IMR-90 (cell line): ENCODE measurements at regions of chr11 and their contacts with region 1.

Region 1: GRCh38 chr11:77047007-77047927 is 13.1 kb downstream of the B3GNT6 start:
- DNase-seq: peak; percentile 91
- ATAC-seq: peak; percentile 87
- H3K4me3 ChIP-seq: peak overlapping the region; percentile 38; the same call in 1 of the 2 replicates
- H3K27ac ChIP-seq: no peak overlapping the region
- H3K4me1 ChIP-seq: no peaks in the 10 kb centered on the region
- H3K27me3 ChIP-seq: peaks cover 11% of the 10 kb centered on the region
- CTCF ChIP-seq: peak; percentile 86
- POLR2A ChIP-seq: no peak
- RAD21 ChIP-seq: peak; percentile 75

Region 2: DNA sequence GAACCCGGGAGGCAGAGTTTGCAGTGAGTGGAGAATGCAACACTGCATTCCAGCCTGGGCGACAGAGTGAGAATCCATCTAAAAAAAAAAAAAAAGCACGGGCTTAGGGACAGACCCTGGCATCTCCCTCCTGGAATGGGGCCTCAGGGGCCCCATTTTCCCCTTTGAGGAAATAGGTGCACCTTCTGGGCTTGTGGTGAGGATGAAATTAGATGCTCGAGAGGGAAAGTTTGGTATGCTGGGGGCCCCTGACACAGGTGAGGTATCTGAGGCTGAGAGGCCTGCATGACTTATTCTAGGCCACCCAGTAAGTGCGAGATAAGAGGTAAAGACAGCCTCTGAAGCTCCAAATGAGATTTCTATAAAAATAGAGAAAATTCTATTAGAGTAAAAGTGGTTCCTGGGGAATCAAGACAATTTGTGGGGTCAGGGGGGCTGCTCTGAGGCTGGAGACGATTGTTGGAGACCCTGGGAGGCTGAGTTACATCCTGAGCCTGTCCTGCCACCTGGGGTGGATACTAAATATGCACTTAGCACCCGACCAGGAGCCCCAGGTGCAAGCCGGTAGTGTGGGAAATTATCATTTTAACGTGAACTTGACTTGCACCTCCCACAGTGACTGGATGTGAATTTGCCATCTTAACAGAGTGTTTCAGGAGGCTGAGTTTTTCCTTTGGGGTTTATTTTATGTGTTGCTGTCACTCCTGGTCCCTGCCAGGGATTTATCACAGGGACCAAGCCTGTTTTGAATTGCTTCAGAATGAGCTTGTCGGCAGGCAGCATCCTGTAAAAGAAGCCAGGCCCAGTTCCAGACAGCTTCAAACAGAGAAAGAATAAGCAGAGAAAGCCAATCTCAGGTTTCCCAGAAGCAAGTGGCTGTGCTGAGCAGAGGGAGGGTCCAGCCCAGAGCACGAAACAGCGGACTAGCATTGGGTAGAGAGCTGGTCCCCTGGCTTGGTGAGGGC is 312.5 kb before region 1 on chr11:
- CTCF ChIA-PET with region 1: interaction called, 3 read pairs
- POLR2A ChIA-PET with region 1: no interaction called
- dilution Hi-C with region 1: no loop called
- in situ Hi-C with region 1: loop called (anchors 25 kb)
- intact Hi-C with region 1: loop called (anchors 2 kb)
- DNase-seq: no peak
- ATAC-seq: no peak; the same call in 1 of the 2 replicates
- H3K4me3 ChIP-seq: no peak overlapping the region
- H3K27ac ChIP-seq: no peak overlapping the region
- H3K4me1 ChIP-seq: peaks cover 2% of the 10 kb centered on the region; the same call in 1 of the 2 replicates
- H3K27me3 ChIP-seq: peaks cover 52% of the 10 kb centered on the region
- CTCF ChIP-seq: no peak
- POLR2A ChIP-seq: no peak
- RAD21 ChIP-seq: no peak

Region 3: DNA sequence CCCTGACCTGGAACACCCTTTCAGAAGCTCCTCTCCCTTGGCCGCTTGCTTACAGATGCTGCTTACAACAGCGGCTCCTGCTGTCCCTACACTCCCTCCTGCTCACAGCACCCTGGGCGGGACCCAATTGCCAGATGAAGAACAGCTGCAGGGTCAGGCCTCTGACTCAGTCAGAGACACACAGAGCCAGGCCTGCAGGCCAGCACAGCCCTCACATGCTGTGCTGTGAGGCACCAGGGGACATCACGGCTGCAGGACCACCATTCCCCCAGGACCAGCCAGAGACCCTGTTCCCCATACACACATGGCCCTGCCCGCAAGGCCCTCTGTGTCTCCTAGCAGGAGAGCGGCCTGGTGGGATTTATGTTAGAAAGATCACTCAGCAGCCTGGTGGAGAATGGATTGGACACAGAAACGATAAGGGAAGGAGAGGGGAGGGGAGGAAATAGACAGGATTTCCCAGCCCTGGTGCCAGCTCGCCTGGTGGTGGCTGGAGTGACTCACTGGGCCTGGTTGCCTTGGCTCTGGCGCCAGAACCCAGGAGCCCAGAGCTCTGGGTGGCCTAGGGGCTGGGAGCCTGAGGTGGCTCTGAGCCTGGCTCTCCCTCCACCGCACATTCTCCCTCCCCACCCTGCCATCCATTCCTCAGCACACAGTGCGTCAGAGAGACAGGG is 26.2 kb after region 1 on chr11:
- CTCF ChIA-PET with region 1: no interaction called
- POLR2A ChIA-PET with region 1: no interaction called
- dilution Hi-C with region 1: no loop called
- in situ Hi-C with region 1: no loop called
- intact Hi-C with region 1: loop called (anchors 2 kb)
- DNase-seq: peak; percentile 94
- ATAC-seq: peak; percentile 98
- H3K4me3 ChIP-seq: no peak overlapping the region
- H3K27ac ChIP-seq: peak overlapping the region; percentile 94
- H3K4me1 ChIP-seq: peaks cover 30% of the 10 kb centered on the region
- H3K27me3 ChIP-seq: no peaks in the 10 kb centered on the region
- CTCF ChIP-seq: peak; percentile 58
- POLR2A ChIP-seq: peak; percentile 34; the same call in 1 of the 2 replicates
- RAD21 ChIP-seq: peak; percentile 46

Region 4: DNA sequence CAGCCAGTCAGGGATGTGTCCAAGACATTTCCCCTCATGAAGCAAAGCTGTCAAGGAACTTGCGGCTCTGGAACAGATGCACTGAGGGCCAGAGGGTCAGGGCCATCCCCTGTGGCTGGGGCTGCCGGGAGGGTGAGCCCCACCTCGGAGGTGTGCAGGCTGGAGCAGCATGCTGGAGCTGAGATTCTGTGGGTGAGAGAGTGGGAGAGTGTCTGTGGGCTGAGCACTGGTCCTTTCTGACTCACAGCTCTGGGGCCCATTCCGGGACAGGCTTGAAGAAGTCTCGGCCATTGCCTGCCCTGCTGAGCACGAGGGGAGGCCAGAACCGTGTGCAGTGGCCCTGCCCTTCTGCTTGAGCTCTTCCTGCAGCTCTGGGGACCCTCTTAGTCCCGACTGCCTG is 57.5 kb after region 1 on chr11:
- CTCF ChIA-PET with region 1: interaction called, 4 read pairs
- POLR2A ChIA-PET with region 1: interaction called, 10 read pairs
- dilution Hi-C with region 1: no loop called
- in situ Hi-C with region 1: no loop called
- intact Hi-C with region 1: no loop called
- DNase-seq: peak; percentile 49
- ATAC-seq: peak; percentile 39
- H3K4me3 ChIP-seq: no peak overlapping the region
- H3K27ac ChIP-seq: no peak overlapping the region
- H3K4me1 ChIP-seq: peaks cover 19% of the 10 kb centered on the region
- H3K27me3 ChIP-seq: no peaks in the 10 kb centered on the region
- CTCF ChIP-seq: no peak
- POLR2A ChIP-seq: no peak
- RAD21 ChIP-seq: no peak

Region 5: DNA sequence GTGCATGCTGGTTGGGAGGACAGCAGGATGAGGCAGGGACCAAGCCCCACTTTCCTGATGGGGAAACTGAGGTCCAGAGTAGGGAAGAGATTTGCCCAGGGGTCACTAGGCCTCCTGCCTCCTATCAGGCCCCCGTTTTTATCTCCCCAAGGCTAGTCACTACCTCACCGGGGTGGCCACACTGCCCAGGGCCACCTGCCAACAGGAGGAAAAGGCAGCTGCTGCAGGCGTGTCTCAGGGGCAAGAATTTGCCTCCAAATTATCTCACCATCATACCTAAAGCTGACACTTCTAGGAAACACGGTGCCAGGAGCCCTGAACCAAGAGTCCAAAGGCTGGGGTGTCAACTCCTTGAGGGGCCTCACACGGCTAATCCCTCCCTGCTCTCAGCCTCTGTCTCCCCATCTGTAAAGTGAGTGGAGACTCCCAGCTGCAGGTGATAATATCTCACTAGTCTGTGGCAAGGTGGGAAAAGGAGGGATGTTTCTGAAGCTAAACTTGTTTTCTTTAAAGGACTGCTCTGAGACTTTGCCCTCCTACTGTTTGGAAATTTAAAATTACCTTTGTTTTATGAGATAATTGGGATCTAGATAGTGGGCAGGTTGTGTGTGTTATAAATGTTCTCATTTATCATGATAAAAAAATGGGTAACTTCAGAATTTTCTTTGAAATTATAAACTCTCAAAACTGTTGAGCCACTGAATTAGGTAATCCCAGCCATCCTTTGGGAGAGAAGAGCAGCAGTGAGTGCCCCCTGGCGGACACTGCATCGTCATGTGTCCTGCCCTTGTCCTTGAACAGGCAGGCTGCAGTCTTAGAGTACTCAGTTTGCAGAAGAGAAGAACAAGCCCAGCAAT is 140.7 kb after region 1 on chr11:
- CTCF ChIA-PET with region 1: no interaction called
- POLR2A ChIA-PET with region 1: no interaction called
- dilution Hi-C with region 1: no loop called
- in situ Hi-C with region 1: loop called (anchors 5 kb)
- intact Hi-C with region 1: loop called (anchors 1 kb)
- DNase-seq: peak; percentile 75
- ATAC-seq: peak; percentile 95
- H3K4me3 ChIP-seq: no peak overlapping the region
- H3K27ac ChIP-seq: no peak overlapping the region
- H3K4me1 ChIP-seq: no peaks in the 10 kb centered on the region
- H3K27me3 ChIP-seq: peaks cover 24% of the 10 kb centered on the region
- CTCF ChIP-seq: peak; percentile 94
- POLR2A ChIP-seq: no peak
- RAD21 ChIP-seq: peak; percentile 94

Region 6: DNA sequence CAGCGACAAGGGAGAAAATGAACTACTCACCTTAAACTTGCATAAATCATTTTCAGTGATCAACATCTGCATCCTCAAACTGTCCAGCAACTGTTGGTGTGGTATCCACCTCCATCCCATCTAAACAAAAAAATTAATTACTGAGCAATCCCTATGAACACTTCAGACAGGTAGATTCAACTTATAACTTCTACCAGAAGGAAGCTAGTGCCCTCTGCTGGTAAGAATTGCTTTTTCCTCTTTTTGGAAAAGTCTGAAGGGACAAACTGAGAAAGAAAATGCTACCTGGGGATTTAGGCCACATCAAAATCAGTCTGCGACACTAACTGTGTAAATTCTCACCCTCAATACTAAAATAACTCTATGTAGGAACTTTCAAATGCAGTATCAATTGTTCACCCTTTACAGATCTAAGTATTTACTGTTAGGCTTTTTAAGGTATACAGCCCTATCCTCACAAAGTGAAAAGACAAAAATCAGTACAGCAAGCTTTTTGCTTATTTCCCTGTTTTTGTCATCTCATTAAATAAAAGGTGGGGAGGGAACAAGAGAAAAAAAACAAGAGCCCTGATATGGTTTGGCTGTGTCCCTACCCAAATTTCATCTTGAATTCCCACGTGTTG is 572.4 kb after region 1 on chr11:
- CTCF ChIA-PET with region 1: no interaction called
- POLR2A ChIA-PET with region 1: no interaction called
- dilution Hi-C with region 1: no loop called
- in situ Hi-C with region 1: no loop called
- intact Hi-C with region 1: loop called (anchors 10 kb)
- DNase-seq: peak; percentile 54
- ATAC-seq: no peak; the same call in 1 of the 2 replicates
- H3K4me3 ChIP-seq: no peak overlapping the region
- H3K27ac ChIP-seq: no peak overlapping the region
- H3K4me1 ChIP-seq: peaks cover 5% of the 10 kb centered on the region
- H3K27me3 ChIP-seq: no peaks in the 10 kb centered on the region
- CTCF ChIP-seq: peak; percentile 75
- POLR2A ChIP-seq: no peak
- RAD21 ChIP-seq: peak; percentile 75